ENCODE measurements at regions of chr11 and their contacts with region 1.

Region 1: DNA sequence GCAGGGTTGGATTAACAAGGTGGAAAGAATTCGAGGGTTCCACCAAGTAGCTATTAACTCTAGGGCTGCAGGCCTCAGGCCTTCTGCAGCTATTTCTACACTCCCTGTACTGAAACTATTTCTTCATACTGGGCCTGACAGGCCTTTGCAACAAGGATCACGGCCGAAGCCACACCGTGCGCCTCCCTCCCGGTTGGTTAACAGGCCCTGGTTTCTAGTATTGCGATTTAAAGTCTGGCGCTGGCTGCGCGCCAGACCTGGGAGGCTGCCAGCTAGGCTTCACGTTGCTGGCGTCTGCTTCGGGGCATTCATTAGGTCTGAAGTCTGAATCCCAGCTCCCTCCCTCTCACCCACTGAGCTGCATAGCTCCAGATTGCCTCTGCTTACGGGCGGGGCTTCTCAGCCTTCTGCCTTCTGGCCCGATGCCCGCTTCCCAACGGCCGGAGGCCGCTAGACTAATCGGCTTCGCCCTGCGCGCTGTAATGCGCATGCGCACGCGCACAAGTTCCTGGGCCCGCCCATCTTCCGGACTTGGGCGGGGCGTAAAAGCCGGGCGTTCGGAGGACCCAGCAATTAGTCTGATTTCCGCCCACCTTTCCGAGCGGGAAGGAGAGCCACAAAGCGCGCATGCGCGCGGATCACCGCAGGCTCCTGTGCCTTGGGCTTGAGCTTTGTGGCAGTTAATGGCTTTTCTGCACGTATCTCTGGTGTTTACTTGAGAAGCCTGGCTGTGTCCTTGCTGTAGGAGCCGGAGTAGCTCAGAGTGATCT is 1.6 kb downstream of the LDHA start:
- DNase-seq: peak; percentile 94 to 97
- ATAC-seq: peak; percentile 70 to 83
- H3K4me3 ChIP-seq: peak overlapping the region; percentile 67 to 86 (median 74)
- H3K27ac ChIP-seq: peak overlapping the region; percentile 85 to 94 (median 93)
- H3K4me1 ChIP-seq: peaks cover 15 to 23% of the 10 kb centered on the region in 2 donors
- H3K27me3 ChIP-seq: no peaks in the 10 kb centered on the region
- CTCF ChIP-seq: no peak
- POLR2A ChIP-seq: peak; percentile 65 to 73

Region 2: GRCh38 chr11:18012863-18013781 is 382.8 kb before region 1 on chr11 and contains the start of gene SERGEF:
- in situ Hi-C with region 1: no loop called
- intact Hi-C with region 1: loop called (anchors 10 kb)
- DNase-seq: peak; percentile 90 to 92
- ATAC-seq: peak; percentile 84 to 86
- H3K4me3 ChIP-seq: peak within 1 kb of the TSS; percentile 78 to 100 (median 91)
- H3K27ac ChIP-seq: peak within 1 kb of the TSS; percentile 78 to 91 (median 86)
- H3K4me1 ChIP-seq: peaks cover 9 to 14% of the 10 kb centered on the region in 2 donors
- H3K27me3 ChIP-seq: no peaks in the 10 kb centered on the region
- CTCF ChIP-seq: peak in 2 of 5 experiments; percentile 24 to 63
- POLR2A ChIP-seq: peak; percentile 60 to 67
- total RNA-seq, gene SERGEF: 11.8 to 34.7 (median 24.5) TPM

Region 3: DNA sequence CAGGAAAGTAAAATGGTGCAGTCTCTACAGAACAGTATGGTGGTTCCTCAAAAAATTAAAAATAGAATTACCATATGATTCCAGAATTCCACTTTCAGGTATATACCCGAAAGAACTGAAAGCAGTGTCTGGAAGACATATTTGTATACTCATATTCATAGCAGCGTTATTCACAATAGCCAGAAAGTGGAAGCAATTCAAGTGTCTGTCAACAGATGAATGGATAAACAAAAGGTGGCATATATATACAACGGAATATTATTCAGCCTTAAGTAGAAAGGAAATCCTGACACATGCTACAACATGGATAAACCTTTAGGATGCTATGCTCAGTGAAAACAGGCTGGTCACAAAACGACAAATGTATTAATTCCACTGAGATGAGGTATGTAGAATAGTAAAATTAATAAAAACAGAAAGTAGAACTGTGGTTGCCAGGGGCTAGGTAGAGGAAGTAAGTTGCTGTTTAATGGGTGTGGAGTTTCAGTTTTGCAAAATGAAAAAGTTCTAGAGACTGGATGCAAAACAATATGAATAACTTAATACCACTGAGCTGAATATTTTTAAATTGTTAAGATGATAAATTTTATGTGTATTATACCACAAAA is 115.4 kb before region 1 on chr11:
- in situ Hi-C with region 1: no loop called
- intact Hi-C with region 1: no loop called
- DNase-seq: no peak
- ATAC-seq: no peak
- H3K4me3 ChIP-seq: no peak overlapping the region
- H3K27ac ChIP-seq: no peak overlapping the region
- H3K4me1 ChIP-seq: no peaks in the 10 kb centered on the region
- H3K27me3 ChIP-seq: no peaks in the 10 kb centered on the region
- CTCF ChIP-seq: no peak
- POLR2A ChIP-seq: no peak

Region 4: GRCh38 chr11:18321980-18322711 is 73.8 kb before region 1 on chr11 and contains the starts of genes GTF2H1 and HPS5:
- in situ Hi-C with region 1: loop called in 3 of 4 experiments (anchors 5 to 10 kb)
- intact Hi-C with region 1: loop called (anchors 1 kb)
- DNase-seq: peak; percentile 93 to 95
- ATAC-seq: peak; percentile 99 to 100
- H3K4me3 ChIP-seq: peak within 1 kb of the TSS; percentile 88 to 89 (median 88)
- H3K27ac ChIP-seq: peak within 1 kb of the TSS; percentile 95 to 99 (median 98)
- H3K4me1 ChIP-seq: peaks cover 31 to 37% of the 10 kb centered on the region in 2 donors
- H3K27me3 ChIP-seq: no peaks in the 10 kb centered on the region
- CTCF ChIP-seq: peak in 1 of 5 experiments; percentile 54
- POLR2A ChIP-seq: peak; percentile 53 to 81
- total RNA-seq, gene GTF2H1: 30.9 to 45.6 (median 33.2) TPM
- total RNA-seq, gene HPS5: 5.3 to 13.1 (median 9.7) TPM

Region 5: DNA sequence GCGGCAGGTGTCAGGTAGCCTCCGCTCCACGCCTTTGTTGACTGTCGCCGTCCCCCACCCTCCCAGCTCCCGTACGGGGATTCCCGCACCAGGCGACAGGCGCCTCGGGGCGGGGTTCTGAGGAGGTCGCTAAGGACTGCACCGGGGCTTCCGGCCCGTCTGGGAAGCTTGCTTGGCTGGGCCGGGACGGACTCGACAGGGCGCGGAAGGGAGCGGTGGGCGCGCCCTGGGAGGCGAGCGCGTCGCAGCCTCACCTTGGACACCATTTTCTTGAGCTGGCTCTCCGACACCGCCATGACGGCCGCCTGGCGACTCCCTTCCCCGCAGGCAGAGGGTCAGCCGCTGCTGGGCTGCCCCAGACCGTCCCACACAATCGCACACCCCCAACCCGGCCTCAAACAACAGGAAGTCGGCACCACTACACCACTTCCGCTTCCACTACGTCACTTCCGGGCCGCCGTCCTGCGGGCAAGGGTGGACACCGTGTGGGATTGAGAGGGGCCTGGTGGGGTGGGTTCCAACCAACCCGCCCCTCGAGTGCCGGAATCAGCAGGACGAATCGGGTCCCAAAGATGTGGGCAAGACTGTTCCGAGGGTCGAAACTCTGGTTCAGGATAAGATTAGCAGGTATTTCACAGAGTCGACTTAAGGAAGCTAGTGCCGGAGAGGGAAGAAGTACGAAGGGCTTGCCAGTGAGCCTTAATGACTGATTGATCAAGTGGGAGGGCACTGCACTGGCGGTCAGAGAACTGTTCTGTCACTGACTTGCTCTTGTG is 130.8 kb after region 1 on chr11 and contains the start of gene TSG101:
- in situ Hi-C with region 1: no loop called
- intact Hi-C with region 1: loop called (anchors 2 kb)
- DNase-seq: peak; percentile 82 to 91
- ATAC-seq: peak; percentile 96 to 98
- H3K4me3 ChIP-seq: peak within 1 kb of the TSS; percentile 70 to 99 (median 97)
- H3K27ac ChIP-seq: peak within 1 kb of the TSS; percentile 91 to 98 (median 96)
- H3K4me1 ChIP-seq: peaks cover 30 to 33% of the 10 kb centered on the region in 2 donors
- H3K27me3 ChIP-seq: no peaks in the 10 kb centered on the region
- CTCF ChIP-seq: no peak
- POLR2A ChIP-seq: peak; percentile 80 to 86
- total RNA-seq, gene TSG101: 106 to 180 (median 170) TPM

Region 6: GRCh38 chr11:18634140-18635032 is 238.5 kb after region 1 on chr11 and contains the start of gene SPTY2D1:
- in situ Hi-C with region 1: no loop called
- intact Hi-C with region 1: loop called (anchors 1 kb)
- DNase-seq: peak; percentile 99 to 100
- ATAC-seq: peak; percentile 99 to 100
- H3K4me3 ChIP-seq: peak within 1 kb of the TSS; percentile 84 to 96 (median 90)
- H3K27ac ChIP-seq: peak within 1 kb of the TSS; percentile 94 to 98 (median 96)
- H3K4me1 ChIP-seq: peaks cover 17 to 20% of the 10 kb centered on the region in 2 donors
- H3K27me3 ChIP-seq: no peaks in the 10 kb centered on the region
- CTCF ChIP-seq: peak in 1 of 5 experiments; percentile 12
- POLR2A ChIP-seq: peak; percentile 86 to 89
- total RNA-seq, gene SPTY2D1: 13.3 to 21.7 (median 17.7) TPM

Region 7: GRCh38 chr11:19712281-19713220 is 1316.6 kb after region 1 on chr11 and contains the start of gene NAV2:
- in situ Hi-C with region 1: no loop called
- intact Hi-C with region 1: loop called (anchors 10 kb)
- DNase-seq: peak; percentile 88 to 92
- ATAC-seq: peak; percentile 91 to 92
- H3K4me3 ChIP-seq: peak within 1 kb of the TSS; percentile 64 to 92 (median 76)
- H3K27ac ChIP-seq: peak within 1 kb of the TSS; percentile 83 to 92 (median 90)
- H3K4me1 ChIP-seq: peaks cover 12 to 25% of the 10 kb centered on the region in 2 donors
- H3K27me3 ChIP-seq: peaks cover 19 to 28% (median 22%) of the 10 kb centered on the region in 3 donors
- CTCF ChIP-seq: peak in 2 of 5 experiments; percentile 20 to 32
- POLR2A ChIP-seq: peak; percentile 92 to 98
- total RNA-seq, gene NAV2: 3.2 to 7.7 (median 5.5) TPM

Measured in gastrocnemius medialis (tissue), 4 donors.